ENCODE measurements at regions of chr18 and their contacts with region 1.

Region 1: DNA sequence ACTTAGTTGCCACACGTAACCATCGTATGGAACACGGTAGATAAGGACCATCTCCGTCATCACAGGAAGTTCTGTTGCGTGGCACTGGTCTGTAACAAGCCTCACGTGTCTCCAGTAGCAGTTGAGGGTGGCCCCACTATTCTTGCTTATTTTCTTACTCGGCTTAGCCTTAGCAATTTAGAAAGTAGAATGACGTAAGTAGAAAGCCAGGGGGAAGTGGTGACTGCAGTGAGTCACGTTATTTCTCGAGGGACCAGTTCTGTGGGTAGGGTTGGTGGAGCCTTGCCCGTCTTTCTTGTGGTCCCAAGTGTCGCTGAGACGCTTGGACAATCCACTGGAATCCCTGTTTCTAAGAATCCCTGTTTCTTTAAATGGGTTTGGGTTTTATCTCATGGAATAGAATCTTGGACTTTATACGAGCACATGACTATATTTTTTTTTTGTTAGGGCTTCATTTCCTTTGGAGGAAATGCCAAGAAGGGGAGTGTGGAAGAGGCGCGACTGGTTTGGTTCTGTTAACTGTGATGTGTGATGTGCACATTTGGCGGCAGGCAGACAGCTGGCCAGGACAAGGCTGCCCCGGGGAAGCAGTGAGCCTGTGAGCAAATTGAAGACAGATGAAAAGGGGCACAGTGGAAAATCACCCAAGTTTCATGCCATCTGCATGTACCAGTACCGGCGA is 96.2 kb downstream of the CABLES1 start:
- DNase-seq: peak; percentile 86 to 96
- H3K4me3 ChIP-seq: no peak overlapping the region
- H3K27ac ChIP-seq: peak overlapping the region; percentile 96 to 97
- H3K4me1 ChIP-seq: peaks cover 15 to 36% of the 10 kb centered on the region in 2 donors
- H3K27me3 ChIP-seq: no peaks in the 10 kb centered on the region
- CTCF ChIP-seq: no peak

Region 2: GRCh38 chr18:22194151-22194598 is 1037.3 kb before region 1 on chr18:
- intact Hi-C with region 1: loop called (anchors 10 kb)
- DNase-seq: no peak
- H3K4me3 ChIP-seq: peak overlapping the region; percentile 24 to 43
- H3K27ac ChIP-seq: peak overlapping the region; percentile 89 to 97
- H3K4me1 ChIP-seq: peaks cover 9 to 84% of the 10 kb centered on the region in 2 donors
- H3K27me3 ChIP-seq: no peaks in the 10 kb centered on the region
- CTCF ChIP-seq: no peak

Region 3: GRCh38 chr18:23131693-23132319 is 99.7 kb before region 1 on chr18:
- intact Hi-C with region 1: loop called (anchors 1 kb)
- DNase-seq: peak in 1 of 2 donors; percentile 85
- H3K4me3 ChIP-seq: no peak overlapping the region
- H3K27ac ChIP-seq: no peak overlapping the region
- H3K4me1 ChIP-seq: peaks cover 0 to 3% of the 10 kb centered on the region in 2 donors
- H3K27me3 ChIP-seq: no peaks in the 10 kb centered on the region
- CTCF ChIP-seq: peak; percentile 74 to 82 (median 75)

Region 4: DNA sequence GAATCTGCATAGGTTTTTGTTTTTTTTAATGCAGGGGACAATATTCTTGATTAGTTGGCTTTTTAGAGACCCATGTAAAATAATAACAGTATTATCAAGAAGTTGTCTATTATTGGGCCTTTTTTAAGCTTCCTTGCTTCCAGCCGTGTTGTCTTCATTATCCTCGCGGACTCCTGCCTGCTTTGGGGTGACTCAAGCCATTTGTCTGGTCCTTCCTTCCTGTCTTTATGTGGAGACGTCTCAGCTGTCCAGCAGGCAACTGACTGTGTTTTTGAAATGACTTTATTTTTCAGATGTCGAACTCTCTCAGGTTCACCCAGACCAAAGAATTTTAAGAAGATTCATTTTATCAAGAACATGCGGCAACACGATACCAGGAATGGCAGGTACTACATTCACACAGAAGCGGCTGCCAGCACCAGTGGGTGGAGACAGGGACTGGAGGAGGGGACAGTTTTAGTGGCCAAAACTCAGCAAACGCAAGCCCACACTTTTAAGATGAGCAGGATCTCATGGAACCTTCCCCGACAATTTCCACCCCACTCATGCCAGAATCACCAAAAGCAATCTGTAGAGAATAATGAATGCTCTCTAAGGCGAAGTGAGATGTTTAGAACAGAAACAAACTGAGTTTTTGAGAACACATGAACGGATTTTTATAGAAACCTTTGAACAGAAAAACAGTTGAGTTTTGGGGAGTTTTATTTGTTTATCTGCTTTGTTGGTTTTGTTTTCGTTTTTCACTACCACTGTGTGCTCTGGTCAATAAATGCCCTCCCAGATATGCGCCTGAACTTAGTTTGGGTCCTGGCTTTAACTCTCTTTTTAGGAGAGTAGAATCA is 37.1 kb before region 1 on chr18:
- intact Hi-C with region 1: no loop called
- DNase-seq: no peak
- H3K4me3 ChIP-seq: no peak overlapping the region
- H3K27ac ChIP-seq: no peak overlapping the region
- H3K4me1 ChIP-seq: peaks cover 0 to 2% of the 10 kb centered on the region in 2 donors
- H3K27me3 ChIP-seq: no peaks in the 10 kb centered on the region
- CTCF ChIP-seq: no peak

Region 5: GRCh38 chr18:23260583-23261257 is 29.2 kb after region 1 on chr18:
- intact Hi-C with region 1: no loop called
- DNase-seq: no peak
- H3K4me3 ChIP-seq: peak overlapping the region; percentile 39 to 55
- H3K27ac ChIP-seq: peak overlapping the region; percentile 95 to 97
- H3K4me1 ChIP-seq: peaks cover 18 to 30% of the 10 kb centered on the region in 2 donors
- H3K27me3 ChIP-seq: no peaks in the 10 kb centered on the region
- CTCF ChIP-seq: no peak

Region 6: GRCh38 chr18:23311351-23312121 is 80.1 kb after region 1 on chr18:
- intact Hi-C with region 1: loop called (anchors 2 kb)
- DNase-seq: peak; percentile 59 to 95
- H3K4me3 ChIP-seq: peak overlapping the region in 1 of 2 donors; percentile 32
- H3K27ac ChIP-seq: peak overlapping the region; percentile 88 to 89
- H3K4me1 ChIP-seq: peaks cover 9 to 28% of the 10 kb centered on the region in 2 donors
- H3K27me3 ChIP-seq: no peaks in the 10 kb centered on the region
- CTCF ChIP-seq: no peak

Region 7: DNA sequence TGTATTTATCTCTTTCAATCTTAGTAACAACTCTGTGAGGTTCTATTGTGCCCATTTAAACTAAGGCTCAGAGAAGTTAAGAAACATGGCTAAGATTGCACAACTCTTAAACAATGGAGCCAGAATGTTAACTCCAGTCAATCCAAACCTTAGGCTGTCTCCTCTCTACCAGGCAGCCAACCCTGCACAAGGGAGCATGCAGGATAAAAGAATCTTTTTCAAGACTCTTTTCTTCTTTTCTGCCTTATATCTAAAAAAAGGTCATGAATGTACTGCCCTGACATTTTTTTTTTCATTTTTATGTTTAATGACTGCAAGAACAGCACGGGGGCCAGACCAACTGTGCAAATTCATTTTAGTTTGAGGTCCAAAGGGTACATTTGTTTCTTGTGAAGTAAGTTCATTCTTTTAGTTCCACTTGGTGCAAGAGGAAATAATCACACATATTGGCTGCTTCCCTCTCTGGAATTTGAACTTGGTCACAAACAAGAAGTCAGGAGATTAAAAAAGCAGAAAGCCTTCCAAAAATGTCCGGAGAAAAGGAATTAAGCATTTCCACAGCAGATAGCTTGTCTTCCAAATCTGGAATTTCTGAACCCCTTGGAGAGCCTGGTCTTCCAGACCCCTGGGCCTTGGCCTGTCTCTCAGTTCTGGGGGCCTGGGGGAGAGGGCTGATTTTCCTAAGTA is 125.6 kb after region 1 on chr18:
- intact Hi-C with region 1: loop called (anchors 5 kb)
- DNase-seq: no peak
- H3K4me3 ChIP-seq: peak overlapping the region; percentile 32 to 54
- H3K27ac ChIP-seq: peak overlapping the region; percentile 91 to 94
- H3K4me1 ChIP-seq: peaks cover 26 to 38% of the 10 kb centered on the region in 2 donors
- H3K27me3 ChIP-seq: no peaks in the 10 kb centered on the region
- CTCF ChIP-seq: no peak

Region 8: DNA sequence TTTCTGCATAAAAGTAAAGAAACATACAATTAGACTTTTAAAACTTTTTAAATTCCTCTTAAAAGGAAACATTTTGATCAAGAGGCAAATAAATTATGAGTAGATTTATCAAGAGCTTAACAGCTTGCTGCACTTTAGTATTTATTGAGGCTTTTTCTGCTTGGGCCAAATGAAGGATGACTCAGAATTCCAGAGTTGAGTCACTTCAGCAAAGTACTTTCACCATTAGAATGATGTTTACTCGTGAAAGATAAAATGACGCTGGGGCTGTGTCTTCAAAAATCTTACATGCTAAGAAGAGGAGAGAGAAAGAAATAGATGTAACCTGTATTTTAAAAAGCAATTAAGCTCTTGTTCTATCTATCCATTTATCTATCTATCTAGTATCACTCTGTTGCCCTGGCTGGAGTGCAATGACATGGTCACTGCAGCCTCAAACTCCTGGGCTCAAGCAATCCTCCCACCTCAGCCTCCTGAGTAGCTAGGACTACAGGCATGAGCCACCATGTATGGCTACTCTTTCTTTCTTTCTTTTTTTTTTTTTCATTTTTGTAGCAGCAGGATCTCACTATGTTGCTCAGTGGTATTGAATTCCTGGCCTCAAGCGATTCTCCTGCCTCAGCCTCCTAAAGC is 146.3 kb after region 1 on chr18:
- intact Hi-C with region 1: loop called (anchors 5 kb)
- DNase-seq: no peak
- H3K4me3 ChIP-seq: no peak overlapping the region
- H3K27ac ChIP-seq: peak overlapping the region; percentile 80
- H3K4me1 ChIP-seq: peaks cover 8 to 25% of the 10 kb centered on the region in 2 donors
- H3K27me3 ChIP-seq: no peaks in the 10 kb centered on the region
- CTCF ChIP-seq: no peak

Region 9: DNA sequence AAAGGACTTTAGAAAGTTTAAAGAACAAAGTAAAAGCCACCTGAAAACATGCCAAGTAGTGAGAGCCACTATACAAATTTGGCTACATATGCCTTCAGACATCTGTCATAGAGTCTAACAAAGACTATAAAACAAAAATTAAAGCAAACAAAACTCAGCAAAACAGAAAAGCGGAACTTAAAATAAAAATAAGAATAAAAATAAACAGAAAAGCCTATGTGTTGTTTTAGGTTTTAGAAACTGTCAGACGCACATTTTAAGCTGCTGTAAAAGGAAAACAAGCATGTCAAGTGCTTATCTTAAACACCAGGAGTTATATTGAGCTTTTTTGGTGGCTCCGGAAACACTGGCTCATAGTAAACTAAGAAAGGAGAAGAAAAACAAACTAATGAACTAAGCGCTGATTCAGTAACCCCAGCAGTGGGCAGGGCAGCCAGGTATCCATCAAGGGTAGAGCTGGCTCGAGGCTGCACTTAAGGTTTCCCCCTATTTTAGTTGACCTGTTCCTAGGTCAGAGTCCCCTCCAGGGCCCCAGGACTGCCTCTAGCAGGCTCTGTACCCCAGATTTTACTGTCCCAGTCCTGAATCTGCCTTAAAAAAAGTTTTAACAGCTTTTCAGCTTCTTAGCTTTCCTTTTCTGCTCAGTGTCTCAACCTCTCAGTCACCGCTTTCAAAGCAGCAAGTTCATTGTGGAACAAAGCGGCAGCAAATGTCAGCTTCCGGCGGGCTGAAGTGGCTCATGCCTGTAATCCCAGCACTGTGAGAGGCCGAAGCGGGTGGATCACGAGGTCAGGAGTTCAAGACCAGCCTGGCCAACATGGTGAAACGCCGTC is 256.5 kb after region 1 on chr18:
- intact Hi-C with region 1: loop called (anchors 10 kb)
- DNase-seq: peak; percentile 42 to 82
- H3K4me3 ChIP-seq: peak overlapping the region; percentile 47 to 61
- H3K27ac ChIP-seq: peak overlapping the region; percentile 90 to 95
- H3K4me1 ChIP-seq: peaks cover 3 to 19% of the 10 kb centered on the region in 2 donors
- H3K27me3 ChIP-seq: no peaks in the 10 kb centered on the region
- CTCF ChIP-seq: no peak